ENCODE measurements at regions of chr13 and their contacts with region 1.

Region 1: GRCh38 chr13:56015919-56016318 is 1124.8 kb upstream of the PRR20A start:
- DNase-seq: no peak
- ATAC-seq: no peak
- H3K4me3 Mint-ChIP-seq: no peak overlapping the region
- H3K27ac Mint-ChIP-seq: no peak overlapping the region
- H3K4me1 Mint-ChIP-seq: peaks cover 20% of the 10 kb centered on the region
- H3K27me3 Mint-ChIP-seq: no peaks in the 10 kb centered on the region; the same call in 1 of the 2 replicates
- CTCF ChIP-seq: no peak

Region 2: DNA sequence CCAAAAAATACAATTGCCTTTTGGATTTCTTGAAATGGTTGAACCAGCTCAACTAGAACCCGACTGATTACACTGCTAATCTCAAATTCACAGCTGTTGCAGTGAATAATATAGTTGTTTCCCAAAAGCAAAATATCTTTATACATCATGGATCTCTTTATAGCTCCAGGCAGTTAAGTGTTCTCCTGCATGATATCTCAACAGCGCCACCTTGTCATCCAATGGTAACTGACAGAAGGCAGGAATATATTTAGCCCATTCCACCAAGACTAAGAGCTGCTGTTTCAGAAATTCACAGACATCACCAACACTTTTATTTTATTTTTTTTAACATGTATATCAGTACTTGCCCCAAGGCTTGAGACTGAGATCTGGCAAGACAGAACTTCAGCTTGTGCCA is 16.2 kb before region 1 on chr13:
- CTCF ChIA-PET with region 1: interaction called, 10 read pairs
- POLR2A ChIA-PET with region 1: interaction called, 3 read pairs
- DNase-seq: peak; percentile 20
- ATAC-seq: peak; percentile 71
- H3K4me3 Mint-ChIP-seq: no peak overlapping the region
- H3K27ac Mint-ChIP-seq: no peak overlapping the region
- H3K4me1 Mint-ChIP-seq: no peaks in the 10 kb centered on the region; the same call in 1 of the 2 replicates
- H3K27me3 Mint-ChIP-seq: no peaks in the 10 kb centered on the region
- CTCF ChIP-seq: peak; percentile 24; the same call in 1 of the 2 replicates

Measured in WTC11 (cell line).